ENCODE measurements at regions of chr13 and their contacts with region 1.

Region 1: DNA sequence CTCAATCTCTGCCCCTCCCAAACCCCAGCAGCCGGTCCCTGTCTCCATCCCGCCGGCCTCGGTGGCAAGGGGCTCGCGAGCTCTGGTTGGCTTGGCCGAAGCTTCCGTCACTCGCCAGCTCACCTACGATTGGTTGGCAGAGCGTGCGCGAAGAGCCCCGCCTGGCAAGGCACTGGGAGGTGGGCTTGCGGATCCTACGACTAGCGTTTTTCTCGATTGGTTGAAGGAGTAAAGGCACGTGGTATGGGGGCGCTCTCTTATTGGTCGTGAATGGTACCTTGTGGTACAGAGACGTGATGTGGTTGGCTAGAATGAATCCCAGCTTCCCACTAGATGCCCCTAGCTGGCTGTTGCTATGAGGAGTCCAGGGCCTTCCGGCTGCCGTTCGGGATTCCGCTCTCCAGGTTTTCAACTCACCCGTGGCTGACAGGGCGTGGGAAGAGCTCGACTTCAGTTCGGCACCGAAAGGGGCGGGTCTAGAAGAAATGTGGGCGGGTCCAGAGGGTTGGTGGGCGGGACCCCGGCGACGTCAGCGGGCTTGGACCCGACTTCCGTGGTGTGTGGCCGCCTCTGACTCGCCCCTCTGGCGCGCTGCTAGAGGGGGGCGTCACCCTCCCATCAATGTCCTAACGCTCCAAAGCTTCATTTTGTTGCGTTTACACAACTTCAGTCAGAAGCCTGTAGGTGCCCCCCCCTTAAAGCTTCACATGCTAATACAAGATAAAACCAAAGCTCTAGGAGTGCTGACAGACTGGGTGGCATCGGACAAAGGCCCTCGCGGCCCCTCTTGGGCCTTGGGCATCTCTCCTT is 847 bp upstream of the RAP2A start:
- DNase-seq: peak; percentile 100
- H3K4me3 ChIP-seq: peak overlapping the region; percentile 69 to 96 (median 93)
- H3K27ac ChIP-seq: peak overlapping the region; percentile 98
- H3K4me1 ChIP-seq: peaks cover 5% of the 10 kb centered on the region
- H3K27me3 ChIP-seq: no peaks in the 10 kb centered on the region
- CTCF ChIP-seq: no peak

Region 2: GRCh38 chr13:96053011-96053703 is 1380.0 kb before region 1 on chr13 and contains the start of gene UGGT2:
- CTCF ChIA-PET with region 1: no interaction called
- dilution Hi-C with region 1: no loop called
- in situ Hi-C with region 1: no loop called
- intact Hi-C with region 1: loop called (anchors 2 kb)
- DNase-seq: peak; percentile 90
- H3K4me3 ChIP-seq: peak within 1 kb of the TSS; percentile 82 to 97 (median 92)
- H3K27ac ChIP-seq: peak within 1 kb of the TSS; percentile 67
- H3K4me1 ChIP-seq: no peaks in the 10 kb centered on the region
- H3K27me3 ChIP-seq: no peaks in the 10 kb centered on the region
- CTCF ChIP-seq: no peak
- total RNA-seq, gene UGGT2: 27.3 to 53.5 TPM

Region 3: DNA sequence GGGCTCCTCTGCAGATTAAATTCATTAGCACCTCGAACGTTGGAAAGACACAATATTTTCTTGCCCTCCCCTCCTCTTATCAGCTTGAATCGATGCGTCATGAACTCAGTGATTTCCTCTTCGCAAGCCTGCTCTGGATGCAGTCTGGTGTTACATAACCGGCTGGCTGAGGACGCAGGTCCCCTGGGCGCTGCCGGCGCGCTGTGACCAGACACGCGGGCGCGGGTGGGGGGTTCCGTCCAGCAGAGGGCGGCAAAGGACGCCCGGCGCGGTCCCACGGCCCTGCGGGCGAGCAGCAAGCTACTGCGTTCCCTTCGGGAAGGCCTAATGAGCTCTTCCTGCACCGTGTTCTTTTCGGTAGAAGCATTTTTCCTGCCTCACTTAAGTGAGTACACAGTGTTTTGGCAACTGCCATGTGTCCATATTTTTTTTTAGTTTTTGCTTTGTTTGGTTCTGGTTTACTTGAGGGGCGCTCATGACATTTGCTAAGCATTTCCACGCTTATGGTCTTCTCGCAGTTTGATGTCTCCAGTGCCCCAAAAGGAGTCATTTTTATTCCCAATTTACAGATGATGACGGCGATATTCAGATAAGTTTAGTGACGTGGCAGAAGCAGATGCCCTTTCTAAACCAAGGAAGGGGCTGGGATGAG is 323.2 kb before region 1 on chr13:
- CTCF ChIA-PET with region 1: no interaction called
- dilution Hi-C with region 1: no loop called
- in situ Hi-C with region 1: no loop called
- intact Hi-C with region 1: loop called (anchors 5 kb)
- DNase-seq: peak; percentile 85
- H3K4me3 ChIP-seq: no peak overlapping the region
- H3K27ac ChIP-seq: no peak overlapping the region
- H3K4me1 ChIP-seq: peaks cover 16% of the 10 kb centered on the region
- H3K27me3 ChIP-seq: no peaks in the 10 kb centered on the region
- CTCF ChIP-seq: peak; percentile 62 to 95

Region 4: GRCh38 chr13:97212601-97213040 is 220.5 kb before region 1 on chr13:
- CTCF ChIA-PET with region 1: no interaction called
- dilution Hi-C with region 1: loop called (anchors 10 kb)
- in situ Hi-C with region 1: no loop called
- intact Hi-C with region 1: no loop called
- DNase-seq: peak; percentile 67
- H3K4me3 ChIP-seq: no peak overlapping the region
- H3K27ac ChIP-seq: no peak overlapping the region
- H3K4me1 ChIP-seq: peaks cover 24% of the 10 kb centered on the region
- H3K27me3 ChIP-seq: no peaks in the 10 kb centered on the region
- CTCF ChIP-seq: peak; percentile 70 to 85

Region 5: DNA sequence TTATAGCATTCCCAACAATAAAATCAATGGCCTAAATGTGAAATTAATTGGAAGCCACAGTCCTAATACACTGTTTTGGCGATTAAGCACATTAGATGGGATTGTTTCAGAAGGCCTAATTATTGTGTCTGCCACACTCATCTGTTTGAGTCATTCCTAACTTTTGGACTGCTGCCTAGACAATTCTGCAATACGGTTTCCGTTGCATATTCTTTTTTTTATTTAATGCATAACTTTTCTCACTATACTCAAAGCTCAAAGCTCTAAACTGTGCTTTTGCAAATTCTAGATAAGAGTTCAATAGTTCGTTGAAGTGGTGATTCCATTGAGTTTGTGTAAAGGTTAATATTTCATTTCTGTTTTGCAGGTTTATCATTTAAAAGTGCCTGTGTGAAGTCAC is 157.9 kb before region 1 on chr13:
- CTCF ChIA-PET with region 1: no interaction called
- dilution Hi-C with region 1: no loop called
- in situ Hi-C with region 1: no loop called
- intact Hi-C with region 1: loop called (anchors 10 kb)
- DNase-seq: peak; percentile 79
- H3K4me3 ChIP-seq: peak overlapping the region in 1 of 3 experiments; percentile 13
- H3K27ac ChIP-seq: peak overlapping the region; percentile 97
- H3K4me1 ChIP-seq: peaks cover 74% of the 10 kb centered on the region
- H3K27me3 ChIP-seq: no peaks in the 10 kb centered on the region
- CTCF ChIP-seq: no peak

Region 6: GRCh38 chr13:97798836-97799235 is 365.7 kb after region 1 on chr13:
- CTCF ChIA-PET with region 1: no interaction called
- dilution Hi-C with region 1: no loop called
- in situ Hi-C with region 1: no loop called
- intact Hi-C with region 1: loop called (anchors 2 kb)
- DNase-seq: no peak
- H3K4me3 ChIP-seq: no peak overlapping the region
- H3K27ac ChIP-seq: no peak overlapping the region
- H3K4me1 ChIP-seq: no peaks in the 10 kb centered on the region
- H3K27me3 ChIP-seq: no peaks in the 10 kb centered on the region
- CTCF ChIP-seq: no peak